Naive thymus-derived CD4-positive, alpha-beta T cell (primary cell): ENCODE measurements at regions of chr5 and their contacts with region 1.

Region 1: GRCh38 chr5:96868603-96869371 is 7.5 kb upstream of the ERAP2 start:
- DNase-seq: peak in 7 of 9 donors; percentile 45 to 75 (median 58)
- ATAC-seq: peak; percentile 97
- H3K4me3 ChIP-seq: no peak overlapping the region
- H3K4me3 Mint-ChIP-seq: peak overlapping the region in 3 of 10 donors; percentile 1 to 63 (median 29)
- H3K27ac ChIP-seq: no peak overlapping the region
- H3K27ac Mint-ChIP-seq: peak overlapping the region in 6 of 9 donors; percentile 10 to 93 (median 42)
- H3K4me1 ChIP-seq: peaks cover 0 to 40% of the 10 kb centered on the region in 2 donors
- H3K4me1 Mint-ChIP-seq: peaks cover 15 to 49% (median 47%) of the 10 kb centered on the region in 7 donors
- H3K27me3 ChIP-seq: no peaks in the 10 kb centered on the region
- H3K27me3 Mint-ChIP-seq: peaks cover 0 to 4% (median 0%) of the 10 kb centered on the region in 5 donors

Region 2: DNA sequence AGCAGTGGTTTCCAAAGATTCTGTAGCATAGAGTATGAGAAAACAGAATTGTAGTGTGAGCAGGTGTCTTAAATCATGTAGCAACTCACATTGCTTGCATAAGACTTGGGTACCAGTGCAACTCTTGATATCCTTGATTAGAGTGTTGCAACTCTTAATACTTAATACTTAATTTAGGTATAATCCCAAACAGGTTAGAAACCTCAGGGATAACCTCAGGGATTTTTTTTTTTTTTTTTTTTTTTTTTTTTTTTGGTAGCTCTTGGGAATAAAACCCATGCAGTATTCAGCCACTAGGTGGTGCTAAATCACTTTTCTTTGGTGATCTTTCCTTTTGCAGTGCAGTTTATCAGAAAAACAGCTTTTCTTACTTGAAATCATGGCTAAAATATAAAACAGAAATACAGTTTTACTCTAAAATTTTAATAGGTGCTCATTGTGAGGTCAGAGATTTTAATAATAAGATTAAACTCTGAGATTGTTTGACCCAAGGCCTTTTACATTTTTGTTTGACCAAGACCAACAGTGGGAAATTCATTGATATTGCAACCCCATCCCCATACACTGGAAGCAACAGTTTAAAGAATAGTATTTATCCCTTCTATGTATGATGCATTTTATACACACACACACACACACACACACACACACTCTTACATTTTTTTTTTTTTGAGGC is 116.3 kb before region 1 on chr5:
- CTCF ChIA-PET with region 1: interaction called, 8 read pairs
- POLR2A ChIA-PET with region 1: no interaction called
- intact Hi-C with region 1: loop called in 1 of 2 experiments (anchors 1 kb)
- DNase-seq: peak in 7 of 9 donors; percentile 46 to 72 (median 60)
- ATAC-seq: peak; percentile 70
- H3K4me3 ChIP-seq: no peak overlapping the region
- H3K4me3 Mint-ChIP-seq: no peak overlapping the region
- H3K27ac ChIP-seq: no peak overlapping the region
- H3K27ac Mint-ChIP-seq: peak overlapping the region in 6 of 9 donors; percentile 36 to 67 (median 56)
- H3K4me1 ChIP-seq: no peaks in the 10 kb centered on the region
- H3K4me1 Mint-ChIP-seq: peaks cover 0 to 8% (median 0%) of the 10 kb centered on the region in 7 donors
- H3K27me3 ChIP-seq: no peaks in the 10 kb centered on the region
- H3K27me3 Mint-ChIP-seq: no peaks in the 10 kb centered on the region

Region 3: GRCh38 chr5:96885518-96886338 is 16.9 kb after region 1 on chr5:
- CTCF ChIA-PET with region 1: interaction called, 13 read pairs
- POLR2A ChIA-PET with region 1: interaction called, 31 read pairs
- intact Hi-C with region 1: loop called (anchors 1 kb)
- DNase-seq: peak in 7 of 9 donors; percentile 46 to 81 (median 69)
- ATAC-seq: peak; percentile 93
- H3K4me3 ChIP-seq: peak overlapping the region; percentile 38
- H3K4me3 Mint-ChIP-seq: peak overlapping the region; percentile 67 to 87 (median 78)
- H3K27ac ChIP-seq: peak overlapping the region; percentile 63
- H3K27ac Mint-ChIP-seq: peak overlapping the region; percentile 91 to 99 (median 96)
- H3K4me1 ChIP-seq: peaks cover 56 to 58% of the 10 kb centered on the region in 2 donors
- H3K4me1 Mint-ChIP-seq: peaks cover 44 to 76% (median 69%) of the 10 kb centered on the region in 7 donors
- H3K27me3 ChIP-seq: no peaks in the 10 kb centered on the region
- H3K27me3 Mint-ChIP-seq: no peaks in the 10 kb centered on the region

Region 4: DNA sequence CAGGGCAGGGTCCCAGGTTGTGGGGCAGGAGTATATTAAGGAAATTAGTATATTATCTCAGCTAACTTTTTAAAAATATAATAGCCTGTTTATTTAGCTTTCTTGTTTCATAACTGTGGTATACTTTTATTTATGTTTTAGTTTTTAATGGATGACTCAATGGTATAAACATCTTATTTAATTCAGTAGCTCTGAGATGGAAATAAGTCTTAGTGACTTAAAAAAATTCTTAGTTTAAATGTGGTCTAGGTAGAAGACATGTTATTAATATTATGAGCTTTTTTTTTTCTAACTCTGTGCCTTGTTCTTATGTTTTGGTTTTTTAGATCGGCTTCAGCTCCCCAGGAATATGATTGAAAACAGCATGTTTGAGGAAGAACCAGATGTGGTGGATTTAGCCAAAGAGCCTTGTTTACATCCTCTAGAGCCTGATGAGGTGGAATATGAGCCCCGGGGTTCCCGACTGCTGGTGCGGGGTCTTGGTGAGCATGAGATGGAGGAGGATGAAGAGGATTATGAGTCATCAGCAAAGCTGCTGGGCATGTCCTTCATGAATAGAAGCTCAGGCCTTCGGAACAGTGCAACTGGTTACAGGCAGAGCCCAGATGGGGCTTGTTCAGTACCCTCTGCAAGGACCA is 110.1 kb after region 1 on chr5:
- CTCF ChIA-PET with region 1: interaction called, 11 read pairs
- POLR2A ChIA-PET with region 1: interaction called, 3 read pairs
- intact Hi-C with region 1: loop called in 1 of 2 experiments (anchors 1 kb)
- DNase-seq: no peak
- ATAC-seq: no peak
- H3K4me3 ChIP-seq: no peak overlapping the region
- H3K4me3 Mint-ChIP-seq: no peak overlapping the region
- H3K27ac ChIP-seq: no peak overlapping the region
- H3K27ac Mint-ChIP-seq: peak overlapping the region in 3 of 9 donors; percentile 5 to 55 (median 24)
- H3K4me1 ChIP-seq: peaks cover 12 to 15% of the 10 kb centered on the region in 2 donors
- H3K4me1 Mint-ChIP-seq: peaks cover 39 to 93% (median 78%) of the 10 kb centered on the region in 7 donors
- H3K27me3 ChIP-seq: no peaks in the 10 kb centered on the region
- H3K27me3 Mint-ChIP-seq: no peaks in the 10 kb centered on the region

Region 5: DNA sequence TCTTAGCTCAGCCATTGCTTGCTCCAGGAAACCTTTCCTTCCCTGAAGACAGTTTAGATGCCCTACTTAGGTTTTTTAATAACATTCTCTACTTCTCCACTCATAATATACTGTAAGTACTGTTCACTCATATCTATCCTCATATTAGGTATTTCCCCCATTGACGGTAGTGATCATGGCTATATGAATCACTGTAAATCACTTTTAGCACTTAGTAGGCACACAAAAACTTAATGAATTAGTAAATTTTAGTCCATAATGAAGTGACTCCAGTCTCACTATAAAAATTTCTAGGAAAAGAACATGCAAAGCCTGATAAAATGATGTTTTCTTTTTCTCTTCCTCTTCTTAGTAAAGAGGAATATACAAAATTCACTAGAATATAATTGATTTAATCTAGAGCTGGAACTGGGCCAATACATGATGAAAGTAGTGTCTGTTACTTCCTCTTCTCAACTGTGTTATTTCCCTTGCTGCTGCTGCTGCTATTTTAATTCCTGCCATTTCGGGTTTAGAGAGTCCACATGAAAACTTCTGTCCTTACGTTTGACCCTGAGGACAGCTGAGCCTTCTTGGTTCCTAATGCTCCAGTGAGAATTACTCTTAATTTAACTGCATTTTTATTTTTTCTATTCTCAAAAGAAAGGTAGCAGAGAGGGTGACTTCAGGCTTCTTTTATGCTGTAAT is 140.6 kb after region 1 on chr5:
- CTCF ChIA-PET with region 1: interaction called, 15 read pairs
- POLR2A ChIA-PET with region 1: no interaction called
- intact Hi-C with region 1: loop called in 1 of 2 experiments (anchors 1 kb)
- DNase-seq: peak in 7 of 9 donors; percentile 25 to 63 (median 49)
- ATAC-seq: peak; percentile 79
- H3K4me3 ChIP-seq: no peak overlapping the region
- H3K4me3 Mint-ChIP-seq: peak overlapping the region; percentile 12 to 77 (median 64)
- H3K27ac ChIP-seq: peak overlapping the region; percentile 9
- H3K27ac Mint-ChIP-seq: peak overlapping the region; percentile 1 to 82 (median 72)
- H3K4me1 ChIP-seq: peaks cover 10 to 21% of the 10 kb centered on the region in 2 donors
- H3K4me1 Mint-ChIP-seq: peaks cover 22 to 52% (median 30%) of the 10 kb centered on the region in 7 donors
- H3K27me3 ChIP-seq: no peaks in the 10 kb centered on the region
- H3K27me3 Mint-ChIP-seq: no peaks in the 10 kb centered on the region

Region 6: DNA sequence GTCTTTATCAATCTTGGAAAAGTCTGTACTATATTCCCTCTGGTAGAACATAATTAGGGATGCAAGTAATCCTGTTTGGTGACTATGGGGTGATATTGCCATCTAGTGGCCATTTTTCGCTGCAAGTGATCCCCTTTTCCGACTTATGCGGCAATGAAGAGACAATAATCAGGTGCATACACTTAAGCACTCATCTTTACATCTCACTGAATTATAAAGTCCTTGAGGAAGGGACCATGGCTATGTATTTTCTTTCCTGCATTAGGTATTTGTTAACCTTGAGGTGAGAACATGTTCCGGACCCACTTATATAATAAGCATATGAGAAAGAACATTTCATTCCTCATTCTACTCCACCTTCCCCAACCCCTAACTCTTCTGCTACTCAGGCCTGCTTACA is 293.3 kb after region 1 on chr5:
- CTCF ChIA-PET with region 1: interaction called, 109 read pairs
- POLR2A ChIA-PET with region 1: interaction called, 4 read pairs
- intact Hi-C with region 1: loop called (anchors 1 kb)
- DNase-seq: peak in 7 of 9 donors; percentile 23 to 64 (median 45)
- ATAC-seq: peak; percentile 62
- H3K4me3 ChIP-seq: no peak overlapping the region
- H3K4me3 Mint-ChIP-seq: no peak overlapping the region
- H3K27ac ChIP-seq: no peak overlapping the region
- H3K27ac Mint-ChIP-seq: no peak overlapping the region
- H3K4me1 ChIP-seq: no peaks in the 10 kb centered on the region
- H3K4me1 Mint-ChIP-seq: peaks cover 0 to 17% (median 11%) of the 10 kb centered on the region in 7 donors
- H3K27me3 ChIP-seq: no peaks in the 10 kb centered on the region
- H3K27me3 Mint-ChIP-seq: peaks cover 0 to 4% (median 0%) of the 10 kb centered on the region in 5 donors